Panc1 (cell line): ENCODE measurements at regions of chr17 and their contacts with region 1.

Region 1: DNA sequence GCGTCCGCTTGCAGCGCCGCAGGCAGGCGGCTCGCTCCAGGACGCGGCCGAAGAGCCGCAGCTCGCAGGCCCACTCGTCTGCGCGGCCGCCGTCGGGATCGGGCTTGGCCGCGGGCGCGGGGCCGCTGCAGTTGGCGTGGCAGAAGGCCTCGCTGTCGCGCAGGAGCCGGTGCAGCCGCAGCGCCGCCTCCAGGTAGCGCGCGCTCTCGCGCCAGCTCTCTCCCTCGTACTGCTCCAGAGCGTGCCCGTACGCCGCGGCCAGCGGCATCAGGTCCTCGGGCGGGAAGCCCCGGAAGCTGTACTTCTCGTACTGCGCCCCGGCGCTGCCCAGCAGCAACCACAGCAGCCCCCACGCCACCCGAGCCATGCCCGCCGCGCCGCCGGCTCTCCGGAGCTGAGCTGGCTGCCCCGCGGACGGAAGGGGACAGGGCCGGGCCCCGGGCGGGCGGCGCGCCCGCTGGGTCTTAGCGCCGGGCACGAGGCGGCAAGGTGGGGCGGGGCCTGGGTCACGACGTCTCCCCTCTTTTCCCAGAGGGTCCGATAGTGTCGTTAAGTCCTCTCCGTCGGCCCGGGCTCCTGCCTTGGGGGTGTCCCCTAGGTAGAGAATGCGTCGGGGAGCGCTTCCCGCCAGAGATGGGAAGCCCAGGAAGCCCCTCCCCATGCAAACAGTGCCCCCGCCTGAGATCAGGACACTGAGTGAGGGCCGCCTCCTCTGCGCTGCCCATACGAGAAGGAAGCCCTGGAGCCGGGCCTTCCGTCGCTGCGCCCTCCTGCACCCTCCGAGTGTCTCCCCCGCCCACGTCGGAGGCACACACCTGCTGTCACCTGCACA is at the start of gene P3H4:
- DNase-seq: peak; percentile 47
- ATAC-seq: peak; percentile 87
- H3K4me3 ChIP-seq: peak within 1 kb of the TSS; percentile 74 to 80
- H3K27ac ChIP-seq: peak within 1 kb of the TSS; percentile 99
- H3K4me1 ChIP-seq: peaks cover 25% of the 10 kb centered on the region
- H3K27me3 ChIP-seq: no peaks in the 10 kb centered on the region
- CTCF ChIP-seq: peak; percentile 91
- total RNA-seq, gene P3H4: 58.9 TPM

Region 2: GRCh38 chr17:41367426-41368075 is 444.2 kb before region 1 on chr17:
- CTCF ChIA-PET with region 1: no interaction called
- POLR2A ChIA-PET with region 1: interaction called, 14 read pairs
- in situ Hi-C with region 1: no loop called
- intact Hi-C with region 1: no loop called
- DNase-seq: no peak
- ATAC-seq: no peak
- H3K4me3 ChIP-seq: no peak overlapping the region
- H3K27ac ChIP-seq: no peak overlapping the region
- H3K4me1 ChIP-seq: no peaks in the 10 kb centered on the region
- H3K27me3 ChIP-seq: peaks cover 2% of the 10 kb centered on the region; the same call in 1 of the 2 replicates
- CTCF ChIP-seq: no peak

Region 3: DNA sequence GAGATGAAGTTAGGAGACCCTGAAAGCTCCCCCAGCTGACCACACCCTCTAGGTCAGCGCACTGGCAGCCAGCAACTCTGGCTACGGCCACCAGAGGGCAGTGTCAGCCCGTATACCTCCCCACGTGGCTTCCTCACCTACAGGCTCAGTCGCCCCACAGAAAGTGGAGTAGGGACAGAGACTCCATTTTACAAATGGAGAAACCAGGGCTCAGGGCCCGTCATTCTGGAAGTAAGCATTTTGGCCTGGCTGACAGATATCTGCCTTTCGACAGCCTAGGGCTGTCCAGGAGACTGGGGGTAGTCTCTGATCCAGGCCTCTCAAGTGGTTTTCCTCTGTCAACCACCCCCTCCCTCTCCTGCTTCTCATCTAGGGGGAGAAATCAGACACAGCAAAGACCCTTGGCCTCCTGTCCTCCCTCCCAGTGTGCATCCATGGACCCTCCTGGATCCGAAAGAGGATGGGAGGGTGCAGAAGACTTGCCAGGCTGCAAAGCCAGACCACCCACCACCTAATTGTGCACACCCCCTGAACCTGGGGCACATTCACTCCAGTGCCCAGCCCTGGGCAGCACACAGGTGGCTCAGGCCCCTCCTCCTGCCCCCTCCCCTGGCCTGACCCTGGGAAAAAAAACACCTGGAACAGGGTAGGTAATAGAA is 73.6 kb before region 1 on chr17:
- CTCF ChIA-PET with region 1: interaction called, 12 read pairs
- POLR2A ChIA-PET with region 1: interaction called, 6 read pairs
- in situ Hi-C with region 1: no loop called
- intact Hi-C with region 1: no loop called
- DNase-seq: peak; percentile 69
- ATAC-seq: peak; percentile 88
- H3K4me3 ChIP-seq: peak overlapping the region in 1 of 2 experiments; percentile 26; a peak in 1 of 4 replicates
- H3K27ac ChIP-seq: peak overlapping the region; percentile 78
- H3K4me1 ChIP-seq: peaks cover 23% of the 10 kb centered on the region
- H3K27me3 ChIP-seq: no peaks in the 10 kb centered on the region
- CTCF ChIP-seq: peak; percentile 94

Region 4: DNA sequence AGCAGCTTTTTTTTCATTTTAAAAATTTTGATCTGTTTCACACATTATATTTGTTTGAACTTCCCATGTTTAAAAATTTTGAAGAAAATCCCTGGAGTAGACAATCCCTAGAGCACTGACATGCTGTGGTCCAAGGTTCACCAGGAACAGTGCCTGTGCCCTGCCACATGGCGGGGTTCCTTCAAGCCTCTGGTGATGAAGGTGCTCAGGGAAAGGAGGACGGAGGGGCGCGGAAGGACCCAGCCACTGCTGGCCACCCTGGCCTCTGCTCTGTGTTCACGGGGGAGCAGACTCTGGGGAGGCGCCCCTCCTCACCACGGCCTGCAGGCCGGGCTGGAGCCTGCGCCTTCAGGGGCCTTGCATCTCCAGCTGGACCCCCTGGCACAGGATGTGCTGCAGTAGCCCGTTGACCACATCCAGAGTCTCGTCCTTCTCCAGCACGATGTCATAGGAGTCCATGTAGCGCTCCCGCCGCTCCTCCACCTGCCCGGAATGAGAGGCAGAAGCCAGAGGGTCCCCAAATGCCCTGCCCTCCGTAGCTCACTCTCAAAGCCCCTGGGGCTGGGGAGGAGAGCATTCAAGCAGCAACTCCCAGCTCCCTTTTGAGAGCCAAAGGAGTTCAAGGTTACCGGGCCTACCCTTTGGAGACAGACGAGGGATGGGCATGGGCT is 13.5 kb after region 1 on chr17:
- CTCF ChIA-PET with region 1: interaction called, 11 read pairs
- POLR2A ChIA-PET with region 1: interaction called, 4 read pairs
- in situ Hi-C with region 1: no loop called
- intact Hi-C with region 1: no loop called
- DNase-seq: no peak
- ATAC-seq: no peak
- H3K4me3 ChIP-seq: no peak overlapping the region
- H3K27ac ChIP-seq: no peak overlapping the region
- H3K4me1 ChIP-seq: no peaks in the 10 kb centered on the region; the same call in 1 of the 2 replicates
- H3K27me3 ChIP-seq: no peaks in the 10 kb centered on the region
- CTCF ChIP-seq: no peak

Region 5: GRCh38 chr17:41930009-41930832 is 118.5 kb after region 1 on chr17 and contains the start of gene ODAD4:
- CTCF ChIA-PET with region 1: no interaction called
- POLR2A ChIA-PET with region 1: no interaction called
- in situ Hi-C with region 1: no loop called
- intact Hi-C with region 1: no loop called
- DNase-seq: peak; percentile 74
- ATAC-seq: peak; percentile 100
- H3K4me3 ChIP-seq: peak within 1 kb of the TSS; percentile 63 to 69
- H3K27ac ChIP-seq: peak within 1 kb of the TSS; percentile 86
- H3K4me1 ChIP-seq: peaks cover 7% of the 10 kb centered on the region; the same call in 1 of the 2 replicates
- H3K27me3 ChIP-seq: no peaks in the 10 kb centered on the region
- CTCF ChIP-seq: no peak
- total RNA-seq, gene ODAD4: 0.69 TPM